ENCODE measurements at regions of chr17 and their contacts with region 1.

Region 1: DNA sequence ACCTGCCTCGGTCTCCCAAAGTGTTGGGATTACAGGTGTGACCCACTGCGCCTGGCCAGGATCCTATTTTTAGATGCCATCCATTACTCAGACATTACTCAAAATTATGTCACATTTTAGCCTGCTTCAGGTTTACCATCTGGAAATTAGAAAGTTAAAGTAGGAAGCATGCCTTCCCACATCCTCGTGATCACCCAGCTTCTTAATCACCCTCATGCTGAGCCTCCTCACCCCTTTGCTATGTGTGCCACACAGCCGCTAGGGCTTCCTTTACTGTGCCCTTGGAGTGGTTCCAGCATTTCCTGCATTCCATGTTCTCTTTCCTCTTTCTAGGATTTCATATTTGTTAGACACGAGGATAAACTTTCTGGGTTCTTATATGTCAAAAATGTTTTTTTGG is 9.3 kb downstream of the ADORA2B start:
- DNase-seq: no peak
- ATAC-seq: no peak
- H3K4me3 Mint-ChIP-seq: no peak overlapping the region
- H3K27ac Mint-ChIP-seq: no peak overlapping the region
- H3K4me1 Mint-ChIP-seq: peaks cover 23% of the 10 kb centered on the region
- H3K27me3 Mint-ChIP-seq: peaks cover 25% of the 10 kb centered on the region

Region 2: DNA sequence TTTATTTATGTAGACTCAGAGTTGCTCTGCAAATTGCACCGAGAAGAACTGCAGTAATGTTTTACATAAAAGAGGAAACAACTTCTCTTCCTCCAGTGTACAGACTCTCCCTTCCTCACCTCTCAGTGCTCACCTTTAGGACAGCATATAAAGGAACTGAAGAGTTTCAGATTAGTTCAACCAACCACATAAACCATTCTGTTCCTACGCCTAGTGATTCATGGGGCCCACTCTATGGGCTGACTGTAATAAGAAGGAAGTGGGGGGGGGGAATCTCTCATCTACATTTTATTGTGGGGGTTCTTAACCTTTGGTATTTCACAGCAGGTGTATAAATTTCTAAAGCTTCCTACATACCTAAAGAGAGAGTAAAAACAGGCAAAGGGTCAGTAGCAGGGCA is 27.0 kb after region 1 on chr17:
- CTCF ChIA-PET with region 1: interaction called, 3 read pairs
- POLR2A ChIA-PET with region 1: no interaction called
- intact Hi-C with region 1: loop called (anchors 1 to 2 kb)
- DNase-seq: peak; percentile 58
- ATAC-seq: peak; percentile 100
- H3K4me3 Mint-ChIP-seq: no peak overlapping the region
- H3K27ac Mint-ChIP-seq: no peak overlapping the region
- H3K4me1 Mint-ChIP-seq: peaks cover 19% of the 10 kb centered on the region
- H3K27me3 Mint-ChIP-seq: no peaks in the 10 kb centered on the region

Measured in activated CD4-positive, alpha-beta T cell treated with anti-CD3 and anti-CD28 coated beads for 36 hours (primary cell).